ENCODE measurements at regions of chr2 and their contacts with region 1.

Region 1: GRCh38 chr2:64750817-64751285 is 97.1 kb upstream of the SERTAD2 start:
- DNase-seq: peak; percentile 97
- H3K4me3 Mint-ChIP-seq: peak overlapping the region; percentile 91
- H3K27ac Mint-ChIP-seq: peak overlapping the region; percentile 98
- H3K4me1 Mint-ChIP-seq: peaks cover 34% of the 10 kb centered on the region
- H3K27me3 Mint-ChIP-seq: no peaks in the 10 kb centered on the region

Region 2: GRCh38 chr2:64144057-64145013 is 606.5 kb before region 1 on chr2 and contains the start of gene PELI1:
- intact Hi-C with region 1: loop called (anchors 5 kb)
- DNase-seq: peak; percentile 90
- H3K4me3 Mint-ChIP-seq: peak within 1 kb of the TSS; percentile 98
- H3K27ac Mint-ChIP-seq: peak within 1 kb of the TSS; percentile 97
- H3K4me1 Mint-ChIP-seq: peaks cover 28% of the 10 kb centered on the region
- H3K27me3 Mint-ChIP-seq: peaks cover 3% of the 10 kb centered on the region
- total RNA-seq, gene PELI1: 47.1 and 50.4 TPM in 2 replicates

Region 3: GRCh38 chr2:64644177-64645004 is 106.5 kb before region 1 on chr2:
- intact Hi-C with region 1: loop called (anchors 2 kb)
- DNase-seq: peak; percentile 51
- H3K4me3 Mint-ChIP-seq: peak overlapping the region; percentile 86
- H3K27ac Mint-ChIP-seq: peak overlapping the region; percentile 90
- H3K4me1 Mint-ChIP-seq: peaks cover 82% of the 10 kb centered on the region
- H3K27me3 Mint-ChIP-seq: peaks cover 3% of the 10 kb centered on the region

Region 4: DNA sequence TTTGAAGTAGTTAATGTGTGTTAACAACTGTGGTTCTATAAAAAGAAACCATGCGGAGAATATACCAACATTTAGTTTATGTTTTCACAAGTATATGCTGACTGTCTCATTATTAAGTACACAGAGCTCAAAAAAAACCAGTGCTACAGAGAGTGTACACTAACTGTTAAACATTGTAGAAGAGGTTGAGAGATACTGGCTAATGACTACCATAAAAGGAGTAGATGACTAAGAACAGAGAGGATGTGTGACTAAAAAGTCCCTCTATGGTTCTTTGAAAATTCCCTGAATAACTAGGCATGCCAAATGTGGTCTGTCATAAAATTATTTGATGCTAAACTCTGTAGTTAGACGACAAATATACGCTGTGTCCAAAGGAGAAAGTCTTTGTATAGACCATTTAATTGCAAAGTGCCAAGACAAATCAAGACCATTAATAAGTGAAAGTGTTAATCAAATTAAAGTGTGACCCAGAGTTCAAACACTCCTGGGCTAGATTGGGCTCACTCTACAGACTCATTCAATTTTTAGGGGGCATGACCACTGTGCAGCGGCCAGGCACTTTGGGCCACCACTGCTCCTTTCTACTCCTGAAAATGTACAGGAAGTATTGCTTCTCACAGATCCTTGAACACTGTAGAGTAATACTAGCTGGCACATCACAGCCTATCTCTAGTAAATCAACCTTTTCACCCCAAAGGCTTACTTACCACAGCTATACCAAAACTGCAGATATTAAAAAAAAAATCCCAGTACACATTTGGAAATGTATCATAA is 52.0 kb before region 1 on chr2:
- intact Hi-C with region 1: loop called (anchors 1 kb)
- DNase-seq: no peak
- H3K4me3 Mint-ChIP-seq: peak overlapping the region; percentile 53
- H3K27ac Mint-ChIP-seq: peak overlapping the region; percentile 90
- H3K4me1 Mint-ChIP-seq: peaks cover 60% of the 10 kb centered on the region
- H3K27me3 Mint-ChIP-seq: no peaks in the 10 kb centered on the region

Region 5: DNA sequence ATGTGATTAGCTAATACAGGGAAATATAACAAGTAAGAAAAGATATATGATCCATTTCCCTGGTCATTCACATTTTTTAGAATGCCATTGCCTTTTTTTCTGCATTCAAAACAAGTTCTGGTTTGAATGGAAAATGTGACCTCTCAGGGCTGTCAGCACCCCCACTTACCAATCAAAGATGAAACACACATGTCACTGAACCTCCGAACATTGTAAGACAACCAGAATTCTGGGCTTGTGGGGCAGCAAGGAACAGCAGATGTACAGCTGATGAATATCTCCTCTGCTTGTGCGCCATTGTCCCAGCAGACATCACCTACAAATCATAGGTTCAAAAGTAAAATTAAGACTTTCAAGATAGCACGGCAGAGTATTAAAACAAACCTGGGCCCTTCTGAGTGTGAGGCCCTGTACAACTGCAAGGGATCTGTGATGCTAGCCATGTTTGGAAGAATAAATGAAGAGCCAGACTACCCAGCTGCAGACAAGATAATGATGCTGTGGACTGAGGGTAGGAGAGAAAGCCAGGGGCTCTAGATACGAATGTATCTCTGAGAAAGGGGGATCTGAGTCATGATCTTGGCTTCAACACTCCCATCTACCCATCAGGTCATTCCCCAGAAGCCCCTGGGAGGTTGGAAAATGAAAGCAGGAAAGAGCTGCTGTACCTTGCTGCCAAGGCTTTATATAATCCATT is 11.6 kb after region 1 on chr2:
- intact Hi-C with region 1: loop called (anchors 1 kb)
- DNase-seq: no peak
- H3K4me3 Mint-ChIP-seq: peak overlapping the region; percentile 27
- H3K27ac Mint-ChIP-seq: no peak overlapping the region
- H3K4me1 Mint-ChIP-seq: peaks cover 55% of the 10 kb centered on the region
- H3K27me3 Mint-ChIP-seq: no peaks in the 10 kb centered on the region

Region 6: DNA sequence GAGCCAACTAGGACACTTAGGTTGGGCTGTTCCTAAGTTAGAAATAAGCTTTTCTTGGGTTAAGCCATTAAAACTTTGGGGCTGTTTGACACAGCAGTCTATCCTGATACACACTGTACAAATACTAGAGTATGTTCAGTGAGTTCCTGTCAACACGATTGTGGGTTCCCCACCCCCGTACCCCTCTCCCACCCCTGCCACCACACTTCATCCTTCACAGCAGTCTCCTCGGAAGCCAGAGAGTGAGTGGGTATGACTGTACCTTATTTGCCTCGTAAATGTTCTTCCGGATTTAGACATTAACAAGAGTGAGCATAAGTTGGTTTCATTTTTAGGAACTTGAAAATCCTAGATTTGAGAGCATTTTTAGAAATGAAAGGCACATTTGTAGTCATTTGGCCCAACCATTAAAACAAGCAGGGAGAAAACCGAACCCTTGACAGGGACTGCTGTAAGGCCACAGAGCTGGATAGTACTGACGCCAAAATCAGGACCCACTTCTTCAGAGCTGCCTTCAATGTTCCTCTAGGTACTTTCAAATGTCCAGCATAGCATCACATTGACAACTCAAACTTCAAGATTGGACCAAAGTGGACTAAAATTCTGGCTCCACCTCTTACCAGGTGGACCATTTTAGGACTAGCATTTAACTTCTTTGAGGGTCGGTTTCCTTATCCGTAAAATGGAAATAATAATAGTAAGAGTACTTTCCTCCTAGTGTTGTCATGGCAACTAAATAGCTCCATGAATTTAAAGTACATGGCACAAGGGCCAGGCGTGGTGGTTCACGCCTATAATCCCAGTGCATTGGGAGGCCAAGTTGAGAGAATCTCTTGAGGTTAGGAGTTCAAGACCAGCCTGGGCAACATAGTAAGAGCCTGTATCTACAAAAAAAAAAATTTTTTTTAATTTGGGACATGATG is 69.2 kb after region 1 on chr2:
- intact Hi-C with region 1: loop called (anchors 1 kb)
- DNase-seq: peak; percentile 30
- H3K4me3 Mint-ChIP-seq: peak overlapping the region; percentile 68
- H3K27ac Mint-ChIP-seq: peak overlapping the region; percentile 93
- H3K4me1 Mint-ChIP-seq: peaks cover 39% of the 10 kb centered on the region
- H3K27me3 Mint-ChIP-seq: peaks cover 2% of the 10 kb centered on the region

Region 7: GRCh38 chr2:64988420-64989125 is 237.7 kb after region 1 on chr2:
- intact Hi-C with region 1: loop called (anchors 5 kb)
- DNase-seq: peak; percentile 75
- H3K4me3 Mint-ChIP-seq: peak overlapping the region; percentile 88
- H3K27ac Mint-ChIP-seq: peak overlapping the region; percentile 92
- H3K4me1 Mint-ChIP-seq: peaks cover 79% of the 10 kb centered on the region
- H3K27me3 Mint-ChIP-seq: peaks cover 11% of the 10 kb centered on the region

Measured in activated T-helper 1 cell treated with anti-CD3 and anti-CD28 coated beads, Interleukin-12 subunit alpha, Interleukin-12 subunit beta, Interleukin-2, Interleukin-4 antibody, amounts not matched to agents 30 ng/mL and 10 ng/mL and 1 ng/mL, durations not matched to agents 14 hours and 24 hours and 36 hours (primary cell).